Activated CD4-positive, alpha-beta memory T cell treated with anti-CD3 and anti-CD28 coated beads for 36 hours (primary cell): ENCODE measurements at regions of chr7 and their contacts with region 1.

Region 1: GRCh38 chr7:136023134-136023875 is 46.1 kb upstream of the MTPN start:
- DNase-seq: no peak
- H3K4me3 Mint-ChIP-seq: no peak overlapping the region
- H3K27ac Mint-ChIP-seq: no peak overlapping the region
- H3K4me1 Mint-ChIP-seq: peaks cover 15% of the 10 kb centered on the region
- H3K27me3 Mint-ChIP-seq: peaks cover 1% of the 10 kb centered on the region

Region 2: DNA sequence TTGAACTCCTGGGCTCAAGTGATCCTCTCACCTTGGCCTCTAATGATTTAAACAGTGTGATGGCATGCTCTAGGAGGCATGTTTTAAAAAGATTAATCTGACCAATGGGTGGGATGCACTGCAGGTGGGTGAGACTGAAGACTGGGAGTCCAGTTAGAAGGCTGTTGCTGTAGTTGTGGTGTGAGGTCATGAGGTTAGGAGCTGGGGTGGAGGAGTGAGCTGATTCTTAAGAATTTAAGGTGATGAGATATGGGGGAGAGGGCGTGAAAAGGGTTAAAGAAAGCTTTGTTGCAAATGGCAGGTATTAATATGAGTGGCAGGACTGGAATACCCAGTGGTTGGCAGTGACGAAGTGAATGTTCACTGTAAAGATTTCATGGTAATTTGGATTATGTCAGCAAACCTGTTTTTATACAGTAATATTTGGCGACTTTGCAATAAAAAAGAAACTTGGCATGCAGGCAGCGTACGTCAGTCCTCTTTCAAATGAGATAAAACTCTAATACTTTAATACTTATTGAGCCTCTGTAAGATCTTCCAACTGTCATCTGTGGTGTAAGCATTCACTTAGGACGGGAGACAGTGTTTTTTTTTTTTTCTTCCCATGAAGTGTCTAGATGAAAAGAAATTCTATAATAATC is 26.6 kb after region 1 on chr7:
- CTCF ChIA-PET with region 1: no interaction called
- POLR2A ChIA-PET with region 1: no interaction called
- intact Hi-C with region 1: no loop called
- DNase-seq: no peak
- H3K4me3 Mint-ChIP-seq: no peak overlapping the region
- H3K27ac Mint-ChIP-seq: no peak overlapping the region
- H3K4me1 Mint-ChIP-seq: peaks cover 4% of the 10 kb centered on the region
- H3K27me3 Mint-ChIP-seq: no peaks in the 10 kb centered on the region

Region 3: DNA sequence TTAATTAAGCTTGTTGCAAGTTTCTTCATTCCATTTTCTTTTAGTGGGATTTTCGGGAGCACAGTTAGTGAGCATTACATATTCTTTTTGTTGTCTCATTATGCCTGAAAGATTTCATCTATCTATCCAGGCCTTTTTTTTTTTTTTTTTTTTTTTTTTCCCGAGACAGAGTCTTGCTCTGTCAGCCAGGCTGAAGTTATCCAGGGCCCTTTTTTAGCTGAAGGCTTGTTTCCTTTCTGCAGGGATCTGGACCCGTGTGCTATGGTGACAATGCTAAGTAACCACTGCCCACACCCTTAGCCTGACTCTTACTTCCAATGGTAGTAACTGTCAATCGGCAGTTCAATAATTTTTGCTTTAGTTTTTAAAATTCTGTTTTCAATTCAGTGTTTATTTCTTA is 144.7 kb after region 1 on chr7:
- CTCF ChIA-PET with region 1: no interaction called
- POLR2A ChIA-PET with region 1: no interaction called
- intact Hi-C with region 1: no loop called
- DNase-seq: no peak
- H3K4me3 Mint-ChIP-seq: no peak overlapping the region
- H3K27ac Mint-ChIP-seq: no peak overlapping the region
- H3K4me1 Mint-ChIP-seq: no peaks in the 10 kb centered on the region
- H3K27me3 Mint-ChIP-seq: no peaks in the 10 kb centered on the region

Region 4: GRCh38 chr7:136183981-136184380 is 160.7 kb after region 1 on chr7:
- CTCF ChIA-PET with region 1: no interaction called
- POLR2A ChIA-PET with region 1: no interaction called
- intact Hi-C with region 1: loop called (anchors 10 kb)
- DNase-seq: no peak
- H3K4me3 Mint-ChIP-seq: no peak overlapping the region
- H3K27ac Mint-ChIP-seq: no peak overlapping the region
- H3K4me1 Mint-ChIP-seq: peaks cover 4% of the 10 kb centered on the region
- H3K27me3 Mint-ChIP-seq: no peaks in the 10 kb centered on the region